ENCODE measurements at regions of chr5 and their contacts with region 1.

Region 1: GRCh38 chr5:132386644-132387286 is 17.3 kb downstream of the SLC22A5 start:
- DNase-seq: peak; percentile 77
- H3K4me3 ChIP-seq: no peak overlapping the region
- H3K27ac ChIP-seq: peak overlapping the region; percentile 99
- H3K4me1 ChIP-seq: peaks cover 48% of the 10 kb centered on the region
- H3K27me3 ChIP-seq: no peaks in the 10 kb centered on the region
- CTCF ChIP-seq: peak; percentile 80 to 90
- POLR2A ChIP-seq: no peak

Region 2: DNA sequence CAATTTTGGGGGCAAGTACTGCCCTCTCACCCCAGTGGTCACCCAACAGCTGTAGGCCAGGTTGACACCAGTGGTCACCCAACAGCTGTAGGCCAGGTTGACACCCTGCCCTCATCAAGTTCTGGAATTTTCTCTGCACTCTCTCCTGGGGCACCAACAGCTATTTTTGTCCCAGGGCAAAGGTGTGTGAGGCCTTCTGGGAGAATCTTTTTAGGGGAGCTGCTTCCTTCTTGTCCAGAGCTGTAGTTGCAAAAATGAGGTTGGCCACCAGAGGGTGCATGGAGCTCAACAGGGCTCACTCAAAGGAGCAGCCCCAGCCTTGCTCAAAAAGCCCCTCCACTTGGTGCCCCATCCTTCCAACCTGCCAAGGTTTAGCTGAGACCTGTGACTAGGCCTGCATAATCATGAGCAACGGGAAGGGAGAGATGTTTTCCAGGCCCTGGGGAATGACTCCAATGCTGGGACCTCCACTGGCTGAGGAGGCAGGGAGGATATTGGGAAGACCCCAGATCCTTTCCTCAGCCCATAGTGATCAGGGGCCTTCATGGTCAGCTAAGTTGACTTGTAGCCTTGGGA is 148.5 kb before region 1 on chr5:
- CTCF ChIA-PET with region 1: interaction called, 5 read pairs
- POLR2A ChIA-PET with region 1: interaction called, 3 read pairs
- dilution Hi-C with region 1: no loop called
- intact Hi-C with region 1: loop called (anchors 1 kb)
- DNase-seq: peak; percentile 69
- H3K4me3 ChIP-seq: no peak overlapping the region
- H3K27ac ChIP-seq: no peak overlapping the region
- H3K4me1 ChIP-seq: no peaks in the 10 kb centered on the region
- H3K27me3 ChIP-seq: no peaks in the 10 kb centered on the region
- CTCF ChIP-seq: peak; percentile 71 to 84
- POLR2A ChIP-seq: no peak

Region 3: GRCh38 chr5:132419502-132420468 is 33.0 kb after region 1 on chr5:
- CTCF ChIA-PET with region 1: interaction called, 32 read pairs
- POLR2A ChIA-PET with region 1: no interaction called
- dilution Hi-C with region 1: no loop called
- intact Hi-C with region 1: loop called (anchors 1 kb)
- DNase-seq: peak; percentile 90
- H3K4me3 ChIP-seq: no peak overlapping the region
- H3K27ac ChIP-seq: peak overlapping the region; percentile 6
- H3K4me1 ChIP-seq: peaks cover 41% of the 10 kb centered on the region
- H3K27me3 ChIP-seq: no peaks in the 10 kb centered on the region
- CTCF ChIP-seq: peak; percentile 77 to 83
- POLR2A ChIP-seq: no peak

Region 4: DNA sequence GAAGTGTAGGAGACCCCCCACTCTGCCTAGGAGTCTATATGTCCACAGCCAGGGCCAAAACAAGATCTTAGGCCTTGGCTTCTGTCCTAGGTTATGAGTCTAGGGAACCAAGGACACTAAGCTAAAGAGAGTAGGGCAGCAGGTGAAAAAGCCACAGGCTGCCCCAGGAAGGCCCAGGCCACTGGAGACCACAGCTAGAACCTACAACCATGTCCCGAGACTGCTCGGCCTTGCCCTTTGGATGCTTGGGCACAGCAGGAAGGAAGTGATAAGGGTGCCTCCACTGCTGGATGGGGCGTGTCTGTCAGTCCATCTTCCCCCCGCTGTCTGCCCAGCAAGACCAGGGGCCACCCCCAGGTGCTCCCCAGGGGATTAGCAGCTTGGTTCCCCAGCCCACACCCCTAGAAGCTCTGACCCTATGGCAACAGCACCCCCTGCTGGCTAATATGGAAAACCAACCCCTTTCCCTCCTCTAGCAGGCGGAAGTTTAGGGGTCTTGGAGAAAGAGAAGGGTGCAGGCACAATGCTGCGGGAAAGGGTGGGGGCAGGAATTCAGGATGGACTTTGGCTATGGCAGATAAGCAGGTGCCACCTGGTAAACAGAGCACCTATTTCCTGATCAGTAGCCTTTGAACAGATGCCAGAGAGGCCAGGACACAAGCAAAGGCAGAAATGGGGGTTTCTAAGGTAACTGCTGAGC is 114.3 kb after region 1 on chr5:
- CTCF ChIA-PET with region 1: interaction called, 220 read pairs
- POLR2A ChIA-PET with region 1: interaction called, 4 read pairs
- dilution Hi-C with region 1: no loop called
- intact Hi-C with region 1: loop called (anchors 1 kb)
- DNase-seq: peak; percentile 71
- H3K4me3 ChIP-seq: no peak overlapping the region
- H3K27ac ChIP-seq: peak overlapping the region; percentile 27
- H3K4me1 ChIP-seq: peaks cover 42% of the 10 kb centered on the region
- H3K27me3 ChIP-seq: no peaks in the 10 kb centered on the region
- CTCF ChIP-seq: peak; percentile 78 to 79
- POLR2A ChIP-seq: no peak

Region 5: DNA sequence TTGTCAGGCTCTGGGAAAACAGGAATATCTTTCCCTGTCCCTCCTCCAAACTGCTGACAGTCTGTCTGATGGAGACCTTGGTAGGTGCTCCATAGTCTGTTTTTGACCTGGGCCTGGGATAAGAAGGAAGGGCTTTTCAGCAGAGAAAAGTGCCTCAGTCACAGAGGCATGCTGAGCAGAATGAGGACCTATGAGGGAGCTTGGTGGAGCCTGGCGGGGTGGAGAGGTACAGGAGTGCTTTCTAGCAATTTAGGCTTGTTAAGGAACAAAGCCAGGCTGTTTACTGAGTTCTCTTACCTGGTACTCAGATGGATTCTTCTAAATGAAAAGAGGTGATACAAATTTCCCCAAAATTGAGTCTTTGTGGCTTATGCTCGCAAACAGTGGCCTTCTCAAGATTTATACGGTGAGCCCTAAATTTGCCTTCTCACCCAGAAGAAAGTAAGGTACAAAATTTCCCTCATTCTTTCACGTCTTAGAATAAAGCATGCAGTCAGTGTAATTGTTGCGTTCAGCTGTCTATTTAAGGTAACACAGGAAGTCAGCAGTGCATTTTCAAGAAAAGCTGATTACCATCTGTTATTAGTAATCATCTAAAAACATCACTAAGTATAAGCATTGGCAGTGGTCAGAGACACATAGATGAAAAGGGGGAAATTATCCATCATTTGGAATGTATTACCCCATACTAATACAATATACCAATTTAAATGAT is 242.6 kb after region 1 on chr5:
- CTCF ChIA-PET with region 1: no interaction called
- POLR2A ChIA-PET with region 1: no interaction called
- dilution Hi-C with region 1: no loop called
- intact Hi-C with region 1: loop called (anchors 10 kb)
- DNase-seq: peak; percentile 21
- H3K4me3 ChIP-seq: no peak overlapping the region
- H3K27ac ChIP-seq: no peak overlapping the region
- H3K4me1 ChIP-seq: peaks cover 7% of the 10 kb centered on the region
- H3K27me3 ChIP-seq: no peaks in the 10 kb centered on the region
- CTCF ChIP-seq: no peak
- POLR2A ChIP-seq: no peak

Region 6: GRCh38 chr5:132866342-132867045 is 479.7 kb after region 1 on chr5 and contains the starts of genes GDF9 and UQCRQ:
- CTCF ChIA-PET with region 1: no interaction called
- POLR2A ChIA-PET with region 1: no interaction called
- dilution Hi-C with region 1: no loop called
- intact Hi-C with region 1: loop called (anchors 5 kb)
- DNase-seq: peak; percentile 99
- H3K4me3 ChIP-seq: peak within 1 kb of the TSS; percentile 14 to 89 (median 76)
- H3K27ac ChIP-seq: peak within 1 kb of the TSS; percentile 78
- H3K4me1 ChIP-seq: peaks cover 12% of the 10 kb centered on the region
- H3K27me3 ChIP-seq: peaks cover 0 to 6% of the 10 kb centered on the region in 2 experiments
- CTCF ChIP-seq: peak in 1 of 2 donors; percentile 43
- POLR2A ChIP-seq: peak; percentile 94
- total RNA-seq, gene GDF9: 0.32 TPM in 1 of 2 replicates, not detected in the other
- total RNA-seq, gene UQCRQ: 390 and 458 TPM in 2 replicates